Activated T-helper 2 cell treated with anti-CD3 and anti-CD28 coated beads, Interferon-gamma antibody, Interleukin-2, Interleukin-4, amounts not matched to agents 10 μg/mL and 5 μg/mL and 100 μg/mL, durations not matched to agents 14 hours and 24 hours and 36 hours (primary cell): ENCODE measurements at regions of chr7 and their contacts with region 1.

Region 1: GRCh38 chr7:55641273-55641691 is 69.0 kb upstream of the VOPP1 start:
- DNase-seq: peak; percentile 11
- H3K4me3 Mint-ChIP-seq: no peak overlapping the region
- H3K27ac Mint-ChIP-seq: no peak overlapping the region
- H3K4me1 Mint-ChIP-seq: peaks cover 8% of the 10 kb centered on the region
- H3K27me3 Mint-ChIP-seq: peaks cover 6% of the 10 kb centered on the region

Region 2: GRCh38 chr7:55887821-55888247 is 246.6 kb after region 1 on chr7:
- intact Hi-C with region 1: loop called (anchors 10 kb)
- DNase-seq: no peak
- H3K4me3 Mint-ChIP-seq: peak overlapping the region; percentile 81
- H3K27ac Mint-ChIP-seq: peak overlapping the region; percentile 74
- H3K4me1 Mint-ChIP-seq: peaks cover 4% of the 10 kb centered on the region
- H3K27me3 Mint-ChIP-seq: no peaks in the 10 kb centered on the region

Region 3: GRCh38 chr7:55964261-55965099 is 323.2 kb after region 1 on chr7 and contains the start of gene NIPSNAP2:
- intact Hi-C with region 1: loop called (anchors 2 kb)
- DNase-seq: peak; percentile 55
- H3K4me3 Mint-ChIP-seq: peak within 1 kb of the TSS; percentile 86
- H3K27ac Mint-ChIP-seq: peak within 1 kb of the TSS; percentile 73
- H3K4me1 Mint-ChIP-seq: peaks cover 10% of the 10 kb centered on the region
- H3K27me3 Mint-ChIP-seq: no peaks in the 10 kb centered on the region
- total RNA-seq, gene NIPSNAP2: 52.3 and 56.3 TPM in 2 replicates

Region 4: GRCh38 chr7:56074371-56074791 is 433.1 kb after region 1 on chr7:
- intact Hi-C with region 1: loop called (anchors 1 kb)
- DNase-seq: peak; percentile 55
- H3K4me3 Mint-ChIP-seq: no peak overlapping the region
- H3K27ac Mint-ChIP-seq: peak overlapping the region; percentile 13
- H3K4me1 Mint-ChIP-seq: peaks cover 4% of the 10 kb centered on the region
- H3K27me3 Mint-ChIP-seq: no peaks in the 10 kb centered on the region

Region 5: GRCh38 chr7:57638666-57639065 is 1997.4 kb after region 1 on chr7:
- intact Hi-C with region 1: no loop called
- DNase-seq: no peak
- H3K4me3 Mint-ChIP-seq: no peak overlapping the region
- H3K27ac Mint-ChIP-seq: no peak overlapping the region
- H3K4me1 Mint-ChIP-seq: no peaks in the 10 kb centered on the region
- H3K27me3 Mint-ChIP-seq: no peaks in the 10 kb centered on the region